ENCODE measurements at regions of chr19 and their contacts with region 1.

Region 1: GRCh38 chr19:10682397-10683063 is 18.7 kb upstream of the QTRT1 start:
- DNase-seq: no peak
- ATAC-seq: no peak
- H3K4me3 ChIP-seq: no peak overlapping the region
- H3K27ac ChIP-seq: no peak overlapping the region
- H3K4me1 ChIP-seq: peaks cover 0 to under 1% of the 10 kb centered on the region in 2 experiments; a peak in 1 of 5 replicates
- H3K27me3 ChIP-seq: no peaks in the 10 kb centered on the region
- CTCF ChIP-seq: no peak
- EP300 ChIP-seq: no peak
- POLR2A ChIP-seq: no peak
- RAD21 ChIP-seq: no peak

Region 2: DNA sequence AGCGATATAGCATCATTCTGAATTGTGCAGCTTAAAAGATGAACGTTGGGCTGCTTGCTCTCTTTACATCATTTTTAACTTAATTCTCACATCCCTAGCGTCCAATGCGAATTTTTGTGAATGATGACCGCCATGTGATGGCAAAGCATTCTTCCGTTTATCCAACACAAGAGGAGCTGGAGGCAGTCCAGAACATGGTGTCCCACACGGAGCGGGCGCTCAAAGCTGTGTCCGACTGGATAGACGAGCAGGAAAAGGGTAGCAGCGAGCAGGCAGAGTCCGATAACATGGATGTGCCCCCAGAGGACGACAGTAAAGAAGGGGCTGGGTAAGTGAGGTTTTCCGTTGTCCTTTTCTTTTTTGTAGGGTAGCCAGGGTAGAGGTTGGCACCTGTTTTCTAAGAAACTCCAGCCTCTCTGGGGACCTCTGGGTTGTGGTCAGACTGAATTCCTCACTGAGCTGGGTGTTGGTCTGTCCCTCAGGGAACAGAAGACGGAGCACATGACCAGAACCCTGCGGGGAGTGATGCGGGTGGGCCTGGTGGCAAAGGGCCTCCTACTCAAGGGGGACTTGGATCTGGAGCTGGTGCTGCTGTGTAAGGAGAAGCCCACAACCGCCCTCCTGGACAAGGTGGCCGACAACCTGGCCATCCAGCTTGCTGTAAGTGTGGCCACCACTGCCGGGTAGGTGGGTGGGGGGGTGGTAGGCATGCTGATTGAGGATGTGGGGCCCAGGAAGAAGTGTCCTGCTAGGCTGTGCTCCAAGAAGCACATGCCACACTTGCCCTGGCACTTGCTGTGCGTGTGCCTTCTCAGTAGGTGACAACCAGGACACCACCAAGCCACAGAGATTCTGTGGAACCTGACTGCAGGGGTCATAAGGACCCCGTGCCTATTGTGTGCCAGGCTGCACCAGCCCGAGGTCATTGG is 11.4 kb before region 1 on chr19:
- CTCF ChIA-PET with region 1: no interaction called
- POLR2A ChIA-PET with region 1: interaction called, 10 read pairs
- in situ Hi-C with region 1: no loop called
- intact Hi-C with region 1: no loop called
- DNase-seq: no peak
- ATAC-seq: no peak
- H3K4me3 ChIP-seq: no peak overlapping the region
- H3K27ac ChIP-seq: no peak overlapping the region
- H3K4me1 ChIP-seq: no peaks in the 10 kb centered on the region; a peak in 1 of 5 replicates
- H3K27me3 ChIP-seq: no peaks in the 10 kb centered on the region
- CTCF ChIP-seq: no peak
- EP300 ChIP-seq: no peak
- POLR2A ChIP-seq: no peak
- RAD21 ChIP-seq: no peak

Region 3: DNA sequence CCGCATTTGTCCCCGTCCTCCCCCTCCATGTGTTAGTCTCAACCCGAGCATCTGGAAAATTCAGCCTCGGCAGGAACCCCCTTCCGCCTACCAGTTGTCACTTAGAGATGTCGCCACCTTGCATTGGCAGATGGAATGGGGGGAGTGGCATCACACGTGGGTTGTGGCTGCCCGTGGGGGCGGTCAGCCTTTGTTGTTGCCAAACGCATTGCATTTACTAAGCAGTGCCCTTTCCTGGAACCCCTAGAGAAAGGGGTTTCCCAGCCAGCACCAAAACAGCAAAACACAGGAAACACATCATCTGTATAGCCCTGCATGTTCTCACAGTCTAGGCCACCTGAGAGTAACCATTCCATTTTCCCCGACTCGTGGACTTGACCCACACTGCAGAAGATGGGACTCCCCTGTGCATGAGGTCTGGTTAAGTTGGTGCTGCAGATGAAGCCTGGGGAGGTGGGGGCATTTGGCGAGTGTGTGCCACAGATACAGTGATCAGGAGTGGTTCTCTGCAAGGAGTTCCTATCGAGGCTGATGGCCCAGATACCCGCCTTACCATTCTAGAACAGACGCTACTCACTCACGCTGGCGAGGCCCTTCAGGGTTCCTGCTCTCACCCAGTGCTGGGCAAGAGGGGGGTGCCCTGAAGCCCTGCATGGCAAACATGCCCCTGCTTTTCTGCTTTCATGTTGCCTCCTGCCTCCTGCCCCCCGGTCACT is 115.2 kb after region 1 on chr19:
- CTCF ChIA-PET with region 1: no interaction called
- POLR2A ChIA-PET with region 1: no interaction called
- in situ Hi-C with region 1: no loop called
- intact Hi-C with region 1: no loop called
- DNase-seq: no peak
- ATAC-seq: no peak
- H3K4me3 ChIP-seq: no peak overlapping the region
- H3K27ac ChIP-seq: no peak overlapping the region
- H3K4me1 ChIP-seq: no peaks in the 10 kb centered on the region
- H3K27me3 ChIP-seq: no peaks in the 10 kb centered on the region
- CTCF ChIP-seq: no peak
- EP300 ChIP-seq: no peak
- POLR2A ChIP-seq: no peak
- RAD21 ChIP-seq: no peak